ENCODE measurements at regions of chr2 and their contacts with region 1.

Region 1: GRCh38 chr2:168968342-168968741 is 62.8 kb downstream of the ABCB11 start:
- DNase-seq: peak; percentile 74
- ATAC-seq: peak; percentile 93
- H3K4me3 ChIP-seq: no peak overlapping the region
- H3K27ac ChIP-seq: peak overlapping the region; percentile 42
- H3K4me1 ChIP-seq: peaks cover 35% of the 10 kb centered on the region
- H3K27me3 ChIP-seq: no peaks in the 10 kb centered on the region
- CTCF ChIP-seq: no peak

Region 2: DNA sequence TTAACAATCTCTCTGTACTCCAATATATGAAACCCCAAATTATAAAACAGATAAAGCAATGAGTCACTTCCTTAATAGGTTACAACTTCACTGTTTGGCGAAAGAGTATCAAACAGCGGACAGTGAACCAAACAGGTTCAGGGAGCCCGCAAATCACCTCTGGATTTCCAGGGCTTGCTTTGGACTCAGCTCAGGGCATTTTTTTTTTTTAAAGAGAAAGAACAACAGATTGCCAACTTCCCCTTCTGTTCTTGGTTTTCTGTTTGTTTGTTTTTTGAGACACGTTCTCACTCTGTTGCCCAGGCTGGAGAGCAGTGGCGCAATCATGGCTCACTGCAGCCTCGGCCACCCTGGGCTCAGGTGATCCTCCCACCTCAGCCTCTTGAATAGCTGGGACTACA is 10.1 kb after region 1 on chr2:
- CTCF ChIA-PET with region 1: interaction called, 10 read pairs
- POLR2A ChIA-PET with region 1: no interaction called
- intact Hi-C with region 1: no loop called
- DNase-seq: peak; percentile 83
- ATAC-seq: peak; percentile 92
- H3K4me3 ChIP-seq: no peak overlapping the region
- H3K27ac ChIP-seq: peak overlapping the region; percentile 26
- H3K4me1 ChIP-seq: peaks cover 6% of the 10 kb centered on the region; the same call in 1 of the 2 replicates
- H3K27me3 ChIP-seq: no peaks in the 10 kb centered on the region
- CTCF ChIP-seq: no peak

Region 3: DNA sequence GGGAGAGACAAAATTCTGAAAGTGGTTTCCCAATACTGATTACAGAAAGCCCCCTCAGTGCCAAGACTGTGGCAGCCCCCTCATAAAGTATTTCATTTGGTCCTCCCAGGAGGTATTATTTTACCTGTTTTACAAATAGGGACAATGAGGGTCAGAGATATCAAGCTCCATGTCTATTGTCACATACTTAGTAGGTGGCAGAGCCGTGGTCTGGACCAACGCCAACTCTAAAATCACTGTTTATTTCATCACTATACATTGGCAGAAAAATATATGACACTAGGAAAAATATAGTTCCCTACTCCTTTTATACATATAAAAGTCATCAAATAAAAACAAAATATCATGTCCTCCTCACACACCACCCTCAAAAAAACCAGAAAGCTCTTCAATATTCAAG is 169.6 kb after region 1 on chr2:
- CTCF ChIA-PET with region 1: no interaction called
- POLR2A ChIA-PET with region 1: no interaction called
- intact Hi-C with region 1: no loop called
- DNase-seq: peak; percentile 31
- ATAC-seq: no peak
- H3K4me3 ChIP-seq: no peak overlapping the region
- H3K27ac ChIP-seq: no peak overlapping the region
- H3K4me1 ChIP-seq: no peaks in the 10 kb centered on the region
- H3K27me3 ChIP-seq: no peaks in the 10 kb centered on the region
- CTCF ChIP-seq: no peak

Region 4: DNA sequence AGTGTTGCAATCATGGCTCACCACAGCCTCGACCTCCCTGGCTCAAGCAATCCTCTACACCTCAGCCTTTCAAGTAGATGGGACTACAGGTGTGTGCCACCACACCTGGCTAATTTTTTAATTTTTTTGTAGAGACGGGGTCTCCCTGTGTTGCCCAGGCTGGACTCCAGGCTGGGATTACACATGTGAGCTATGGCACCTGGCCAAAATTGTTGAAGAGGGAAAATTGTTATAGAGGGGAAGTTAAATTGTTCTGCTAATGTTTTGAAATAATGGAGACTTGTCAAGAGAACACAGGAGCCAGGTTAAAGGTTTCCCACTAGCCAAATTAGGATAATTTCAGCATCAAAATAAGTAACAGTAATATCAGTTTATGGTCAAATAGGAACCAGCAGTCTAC is 640.9 kb after region 1 on chr2:
- CTCF ChIA-PET with region 1: no interaction called
- POLR2A ChIA-PET with region 1: no interaction called
- intact Hi-C with region 1: no loop called
- DNase-seq: no peak
- ATAC-seq: no peak
- H3K4me3 ChIP-seq: no peak overlapping the region
- H3K27ac ChIP-seq: no peak overlapping the region
- H3K4me1 ChIP-seq: no peaks in the 10 kb centered on the region
- H3K27me3 ChIP-seq: no peaks in the 10 kb centered on the region
- CTCF ChIP-seq: no peak

Measured in PC-3 (cell line).